Endothelial cell of umbilical vein (primary cell): ENCODE measurements at regions of chr9 and their contacts with region 1.

Region 1: GRCh38 chr9:97518909-97519307 is 17.4 kb downstream of the TMOD1 start:
- DNase-seq: peak; percentile 97
- H3K4me3 ChIP-seq: peak overlapping the region in 1 of 3 experiments; percentile 25
- H3K27ac ChIP-seq: peak overlapping the region; percentile 78
- H3K4me1 ChIP-seq: peaks cover 20% of the 10 kb centered on the region
- H3K27me3 ChIP-seq: no peaks in the 10 kb centered on the region
- CTCF ChIP-seq: no peak
- POLR2A ChIP-seq: peak; percentile 23

Region 2: DNA sequence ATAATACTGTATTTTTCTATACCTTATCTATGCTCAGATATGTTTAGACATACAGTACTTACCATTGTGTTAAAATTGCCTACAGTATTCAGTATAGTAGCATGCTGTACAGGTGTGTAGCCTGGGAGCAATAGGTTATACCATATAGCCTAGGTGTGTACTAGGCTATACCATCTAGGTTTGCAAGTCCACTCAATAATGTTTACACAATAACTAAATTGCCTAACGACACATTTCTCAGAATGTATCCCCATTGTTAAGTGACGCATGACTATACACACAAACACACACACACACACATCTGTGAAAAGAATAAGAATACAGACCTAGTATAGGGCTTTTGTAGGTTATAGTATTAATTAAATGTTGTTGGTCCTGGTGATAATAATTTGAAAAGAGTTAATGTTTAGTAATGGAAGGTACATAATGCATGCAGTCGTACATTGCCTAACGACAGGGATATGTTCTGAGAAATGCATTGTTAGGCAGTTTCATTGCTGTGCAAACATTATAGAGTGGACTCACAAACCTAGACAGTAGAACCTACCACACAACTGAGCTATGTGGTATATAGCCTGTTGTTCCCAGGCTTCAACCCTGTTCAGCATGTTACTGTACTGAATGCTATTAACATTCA is 93.5 kb before region 1 on chr9:
- CTCF ChIA-PET with region 1: no interaction called
- POLR2A ChIA-PET with region 1: no interaction called
- dilution Hi-C with region 1: no loop called
- intact Hi-C with region 1: no loop called
- DNase-seq: no peak
- H3K4me3 ChIP-seq: no peak overlapping the region
- H3K27ac ChIP-seq: no peak overlapping the region
- H3K4me1 ChIP-seq: no peaks in the 10 kb centered on the region
- H3K27me3 ChIP-seq: no peaks in the 10 kb centered on the region
- CTCF ChIP-seq: no peak
- POLR2A ChIP-seq: no peak

Region 3: GRCh38 chr9:97564291-97565175 is 45.6 kb after region 1 on chr9:
- CTCF ChIA-PET with region 1: no interaction called
- POLR2A ChIA-PET with region 1: no interaction called
- dilution Hi-C with region 1: no loop called
- intact Hi-C with region 1: loop called (anchors 1 kb)
- DNase-seq: peak; percentile 89
- H3K4me3 ChIP-seq: no peak overlapping the region
- H3K27ac ChIP-seq: no peak overlapping the region
- H3K4me1 ChIP-seq: peaks cover 16% of the 10 kb centered on the region
- H3K27me3 ChIP-seq: peaks cover 6 to 22% of the 10 kb centered on the region in 2 experiments
- CTCF ChIP-seq: no peak
- POLR2A ChIP-seq: no peak

Region 4: GRCh38 chr9:97638666-97639065 is 119.8 kb after region 1 on chr9:
- CTCF ChIA-PET with region 1: no interaction called
- POLR2A ChIA-PET with region 1: no interaction called
- dilution Hi-C with region 1: no loop called
- intact Hi-C with region 1: no loop called
- DNase-seq: no peak
- H3K4me3 ChIP-seq: no peak overlapping the region
- H3K27ac ChIP-seq: no peak overlapping the region
- H3K4me1 ChIP-seq: peaks cover 22% of the 10 kb centered on the region
- H3K27me3 ChIP-seq: no peaks in the 10 kb centered on the region
- CTCF ChIP-seq: no peak
- POLR2A ChIP-seq: no peak